Sciatic nerve (tissue), 2 donors: ENCODE measurements at regions of chr19 and their contacts with region 1.

Region 1: DNA sequence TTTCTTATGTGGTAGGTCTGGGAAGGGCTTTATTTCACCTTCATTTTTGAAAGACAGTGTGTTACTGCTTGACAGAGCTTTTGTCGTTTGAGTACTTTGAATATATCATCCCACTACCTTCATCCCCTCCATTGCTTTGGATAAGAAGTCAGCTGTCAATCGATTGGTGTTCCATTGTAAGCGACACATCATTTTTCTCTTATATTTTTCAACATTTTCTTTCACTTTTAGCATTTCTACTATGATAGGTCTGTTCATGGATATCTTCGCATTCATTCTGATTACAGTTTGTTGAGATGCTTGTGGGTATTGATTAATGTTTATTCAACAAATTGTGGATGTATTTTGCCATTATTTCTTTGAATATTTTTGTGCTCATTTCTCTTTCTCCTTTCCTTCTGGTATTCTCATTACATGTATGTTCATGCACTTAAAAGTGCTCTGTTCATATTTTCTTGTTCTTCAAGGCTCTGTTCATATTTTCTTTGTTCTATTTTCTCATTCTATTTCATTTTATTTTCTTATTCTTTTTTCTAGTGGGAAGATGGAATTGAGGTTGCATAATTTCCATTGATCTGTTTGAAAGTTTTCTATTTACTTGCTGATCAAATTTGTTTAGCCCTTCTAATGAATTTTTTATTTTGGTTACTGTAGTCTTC is 29.2 kb downstream of the ZNF546 start:
- DNase-seq: no peak
- ATAC-seq: no peak

Region 2: GRCh38 chr19:39240421-39240820 is 785.6 kb before region 1 on chr19:
- intact Hi-C with region 1: loop called (anchors 5 kb)
- DNase-seq: no peak
- ATAC-seq: no peak

Region 3: GRCh38 chr19:40006273-40006691 is 19.8 kb before region 1 on chr19:
- intact Hi-C with region 1: no loop called
- DNase-seq: no peak
- ATAC-seq: no peak

Region 4: GRCh38 chr19:40110570-40110969 is 84.5 kb after region 1 on chr19:
- intact Hi-C with region 1: no loop called
- DNase-seq: no peak
- ATAC-seq: no peak

Region 5: DNA sequence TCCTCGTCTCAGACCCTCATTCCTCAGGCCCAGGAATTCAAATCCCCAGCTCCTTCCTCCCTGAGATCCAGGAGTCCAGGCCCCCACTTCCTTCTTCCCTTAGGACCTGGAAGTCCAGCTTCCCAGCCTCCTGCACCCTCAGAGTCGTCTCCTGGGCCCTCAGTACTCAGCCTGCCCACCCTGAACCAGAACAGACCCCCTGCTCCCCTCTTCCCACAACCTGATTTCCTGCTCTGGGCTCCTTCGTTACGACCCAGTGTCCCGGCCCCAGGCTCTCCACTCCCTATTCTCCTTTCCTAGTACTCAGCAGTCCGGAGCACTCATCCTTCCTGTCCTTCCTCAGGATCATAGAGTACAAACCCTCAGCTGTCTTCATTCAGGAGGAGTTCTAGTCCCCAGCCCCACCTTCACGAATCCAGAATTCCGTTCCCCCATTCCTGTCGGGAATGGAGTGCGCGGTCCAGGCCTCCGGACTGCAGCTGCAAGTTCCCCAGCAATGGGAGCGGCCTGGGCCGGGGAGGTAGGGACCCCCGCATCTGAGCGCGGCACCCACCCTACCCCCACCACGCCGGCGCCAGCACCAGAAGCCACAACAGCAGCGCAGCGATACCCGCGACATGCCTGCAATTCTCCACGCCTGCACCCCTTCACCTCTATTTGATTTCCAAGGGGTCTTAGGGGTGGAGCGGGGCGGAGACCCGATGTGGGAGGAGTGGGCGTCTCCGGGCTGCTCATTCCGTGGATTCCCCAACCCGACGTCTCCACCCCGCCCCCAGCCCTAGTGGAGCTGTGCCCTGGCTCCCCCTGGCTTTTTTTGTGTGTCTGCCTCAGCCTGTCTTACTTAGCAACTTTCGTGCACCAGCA is 785.6 kb after region 1 on chr19:
- intact Hi-C with region 1: no loop called
- DNase-seq: no peak
- ATAC-seq: no peak